ENCODE measurements at regions of chr3 and their contacts with region 1.

Region 1: DNA sequence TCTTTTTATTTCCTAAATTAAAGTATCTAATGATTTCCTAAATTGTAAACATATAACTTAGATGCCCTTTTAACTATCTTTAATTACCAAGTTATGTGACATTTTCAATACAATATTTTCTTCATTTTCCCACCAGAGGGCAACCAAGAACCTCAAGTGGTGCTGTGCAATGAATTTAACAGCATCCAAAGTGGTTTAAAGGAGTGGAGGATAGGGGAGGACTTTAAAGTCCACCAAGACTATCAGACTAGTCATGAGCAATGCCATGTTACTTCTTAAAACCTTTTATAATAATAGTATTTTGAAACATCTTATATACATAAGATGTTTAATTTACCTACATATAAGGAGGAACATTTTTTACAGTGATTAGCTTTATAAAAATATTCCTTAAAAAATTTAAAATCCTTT is 74.4 kb downstream of the DLG1 start:
- DNase-seq: no peak
- ATAC-seq: no peak
- H3K4me3 Mint-ChIP-seq: no peak overlapping the region
- H3K27ac Mint-ChIP-seq: no peak overlapping the region
- H3K4me1 Mint-ChIP-seq: peaks cover 8% of the 10 kb centered on the region
- H3K27me3 Mint-ChIP-seq: no peaks in the 10 kb centered on the region

Region 2: GRCh38 chr3:197165890-197166289 is 58.1 kb before region 1 on chr3:
- CTCF ChIA-PET with region 1: no interaction called
- POLR2A ChIA-PET with region 1: no interaction called
- DNase-seq: no peak
- ATAC-seq: no peak
- H3K4me3 Mint-ChIP-seq: no peak overlapping the region
- H3K27ac Mint-ChIP-seq: no peak overlapping the region
- H3K4me1 Mint-ChIP-seq: peaks cover 2% of the 10 kb centered on the region
- H3K27me3 Mint-ChIP-seq: no peaks in the 10 kb centered on the region

Region 3: GRCh38 chr3:197456261-197457091 is 232.4 kb after region 1 on chr3:
- CTCF ChIA-PET with region 1: interaction called, 21 read pairs
- POLR2A ChIA-PET with region 1: no interaction called
- DNase-seq: peak; percentile 56
- ATAC-seq: peak; percentile 59
- H3K4me3 Mint-ChIP-seq: peak overlapping the region; percentile 70
- H3K27ac Mint-ChIP-seq: peak overlapping the region; percentile 73
- H3K4me1 Mint-ChIP-seq: peaks cover 17% of the 10 kb centered on the region
- H3K27me3 Mint-ChIP-seq: peaks cover 22% of the 10 kb centered on the region

Region 4: DNA sequence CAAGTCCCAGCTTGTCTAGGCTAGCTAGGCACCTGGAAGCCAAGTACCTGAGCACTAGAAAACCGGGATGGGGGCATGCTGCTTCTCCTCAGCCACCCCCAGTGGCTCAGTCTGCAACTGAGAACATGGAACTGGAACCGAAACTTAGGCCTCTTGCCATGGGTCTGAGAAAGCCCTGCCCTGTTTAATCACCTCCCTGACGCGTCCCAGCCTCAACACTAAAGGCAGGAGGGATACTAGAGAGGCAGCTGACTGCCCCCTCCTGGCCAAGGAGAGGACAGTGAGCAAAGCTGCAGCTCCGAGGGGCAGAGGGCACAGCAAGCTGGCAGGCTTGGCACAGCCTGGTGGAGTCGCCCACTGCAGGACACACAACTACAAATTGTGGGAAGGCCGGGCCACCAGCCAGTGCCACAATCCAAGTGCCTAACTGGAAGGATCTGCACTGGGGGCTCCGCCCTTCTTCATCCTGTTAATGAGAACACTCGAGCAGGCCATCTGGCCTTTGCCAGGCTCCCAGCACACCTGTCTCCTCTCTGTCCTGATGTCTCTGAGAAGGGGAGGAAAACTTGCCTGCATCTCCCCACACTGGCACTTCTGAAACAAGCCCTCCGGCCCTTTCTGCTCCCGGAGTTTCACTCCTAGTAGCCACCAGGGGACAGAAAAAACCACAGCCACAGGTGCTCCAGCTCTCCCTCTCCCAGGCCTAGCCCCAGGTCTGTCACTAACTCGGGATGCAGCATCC is 278.0 kb after region 1 on chr3:
- CTCF ChIA-PET with region 1: interaction called, 17 read pairs
- POLR2A ChIA-PET with region 1: no interaction called
- DNase-seq: peak; percentile 54
- ATAC-seq: peak; percentile 63
- H3K4me3 Mint-ChIP-seq: no peak overlapping the region
- H3K27ac Mint-ChIP-seq: no peak overlapping the region
- H3K4me1 Mint-ChIP-seq: peaks cover 12% of the 10 kb centered on the region
- H3K27me3 Mint-ChIP-seq: no peaks in the 10 kb centered on the region

Region 5: GRCh38 chr3:197511130-197511529 is 287.1 kb after region 1 on chr3:
- CTCF ChIA-PET with region 1: interaction called, 17 read pairs
- POLR2A ChIA-PET with region 1: no interaction called
- DNase-seq: no peak
- ATAC-seq: no peak
- H3K4me3 Mint-ChIP-seq: no peak overlapping the region
- H3K27ac Mint-ChIP-seq: no peak overlapping the region
- H3K4me1 Mint-ChIP-seq: peaks cover 16% of the 10 kb centered on the region
- H3K27me3 Mint-ChIP-seq: no peaks in the 10 kb centered on the region